ENCODE measurements at regions of chr15 and their contacts with region 1.

Region 1: DNA sequence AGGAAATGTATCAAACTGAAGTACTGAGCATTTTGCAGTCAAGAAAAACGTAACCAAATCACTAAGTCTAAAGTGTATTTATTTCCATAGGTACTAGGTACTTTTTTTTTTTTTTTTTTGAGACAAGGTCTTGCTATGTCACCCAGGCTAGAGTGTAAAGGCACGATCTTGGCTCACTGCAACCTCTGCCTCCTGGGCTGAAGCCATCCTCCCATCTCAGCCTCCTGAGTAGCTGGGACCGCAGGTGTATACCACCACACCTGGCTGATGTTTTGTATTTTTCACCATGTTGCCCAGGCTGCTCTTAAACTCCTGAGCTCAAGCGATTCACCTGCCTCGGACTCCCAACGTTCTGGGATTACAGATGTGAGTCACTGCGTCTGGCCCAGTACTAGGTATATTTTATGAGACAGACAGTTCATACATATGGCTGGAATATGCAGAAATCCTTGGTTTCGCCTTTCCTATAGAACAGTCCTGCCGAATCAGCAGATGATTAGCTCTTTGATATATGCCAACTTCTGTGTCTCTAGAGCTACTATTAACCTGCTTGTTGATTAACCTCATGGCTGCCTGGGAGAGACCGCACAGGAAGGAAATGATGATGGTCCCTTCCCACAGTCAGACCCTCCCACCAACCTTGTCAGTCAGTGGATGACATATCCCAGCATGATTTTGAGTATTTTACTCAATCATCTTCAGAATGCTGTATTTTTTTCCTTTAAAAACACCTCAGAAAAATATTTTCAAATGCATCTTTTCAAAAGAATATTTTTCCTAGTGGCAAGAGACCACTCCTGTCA is 32.3 kb downstream of the TMOD3 start:
- DNase-seq: peak; percentile 39 to 86 (median 52)
- ATAC-seq: peak; percentile 98
- H3K4me3 ChIP-seq: peak overlapping the region; percentile 28
- H3K4me3 Mint-ChIP-seq: peak overlapping the region; percentile 62
- H3K27ac ChIP-seq: peak overlapping the region in 1 of 2 donors; percentile 34
- H3K27ac Mint-ChIP-seq: peak overlapping the region; percentile 88
- H3K4me1 ChIP-seq: peaks cover 19% of the 10 kb centered on the region
- H3K4me1 Mint-ChIP-seq: peaks cover 68% of the 10 kb centered on the region
- H3K27me3 ChIP-seq: no peaks in the 10 kb centered on the region
- H3K27me3 Mint-ChIP-seq: no peaks in the 10 kb centered on the region
- CTCF ChIP-seq: no peak

Region 2: DNA sequence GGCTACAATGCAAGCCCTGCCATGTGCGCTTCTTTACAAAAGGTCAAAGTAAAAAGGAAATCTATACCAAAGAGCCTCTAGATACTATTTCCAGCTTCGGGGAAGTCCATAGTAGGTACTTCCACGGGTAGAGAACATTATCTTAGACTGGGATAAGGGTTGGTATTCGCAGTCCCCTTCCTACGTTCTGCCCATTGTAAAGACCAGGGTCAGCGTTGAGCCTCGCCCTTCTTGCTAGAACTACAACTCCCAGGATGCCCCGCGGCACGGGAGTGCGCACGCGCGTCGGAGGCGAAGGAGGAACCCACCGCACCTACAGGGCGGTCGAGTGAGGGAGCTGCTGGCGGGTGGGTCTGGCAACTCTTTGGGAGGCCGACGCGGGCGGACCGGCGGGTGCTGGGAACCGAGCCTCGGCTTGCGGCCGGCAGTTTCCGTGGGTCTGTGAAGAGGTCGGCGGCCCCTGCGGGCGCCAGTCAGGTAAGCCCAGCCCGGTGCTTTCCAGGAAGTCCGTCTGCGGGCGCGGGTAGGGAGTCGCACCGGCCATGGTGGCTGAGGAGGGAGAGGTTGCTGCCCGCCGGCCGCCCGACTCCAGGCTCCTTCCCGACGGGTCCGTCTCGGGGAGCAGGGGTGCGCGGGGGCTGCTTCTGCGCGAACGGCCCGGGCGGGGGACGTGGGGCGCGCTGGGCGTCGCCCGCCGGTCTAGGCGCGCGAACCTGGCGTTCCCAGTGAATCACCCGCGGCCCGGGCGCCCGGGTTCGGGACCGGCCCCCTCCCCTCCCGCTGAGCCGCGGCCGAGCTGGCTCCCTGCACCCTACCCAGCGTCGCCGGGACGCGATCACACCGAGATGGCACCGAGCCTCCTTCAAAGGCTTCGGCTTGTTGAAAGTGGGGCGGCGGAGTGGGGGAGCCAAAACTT is 32.1 kb before region 1 on chr15 and contains the start of gene TMOD3:
- CTCF ChIA-PET with region 1: interaction called, 3 read pairs
- POLR2A ChIA-PET with region 1: interaction called, 15 read pairs
- intact Hi-C with region 1: loop called (anchors 1 to 2 kb)
- DNase-seq: peak; percentile 83 to 93 (median 86)
- ATAC-seq: peak; percentile 82
- H3K4me3 ChIP-seq: peak within 1 kb of the TSS; percentile 82
- H3K4me3 Mint-ChIP-seq: peak within 1 kb of the TSS; percentile 100
- H3K27ac ChIP-seq: peak within 1 kb of the TSS; percentile 63 to 85
- H3K27ac Mint-ChIP-seq: peak within 1 kb of the TSS; percentile 91
- H3K4me1 ChIP-seq: peaks cover 15% of the 10 kb centered on the region
- H3K4me1 Mint-ChIP-seq: peaks cover 52% of the 10 kb centered on the region
- H3K27me3 ChIP-seq: no peaks in the 10 kb centered on the region
- H3K27me3 Mint-ChIP-seq: no peaks in the 10 kb centered on the region
- CTCF ChIP-seq: no peak
- total RNA-seq, gene TMOD3: 37.6 to 39.0 TPM

Region 3: DNA sequence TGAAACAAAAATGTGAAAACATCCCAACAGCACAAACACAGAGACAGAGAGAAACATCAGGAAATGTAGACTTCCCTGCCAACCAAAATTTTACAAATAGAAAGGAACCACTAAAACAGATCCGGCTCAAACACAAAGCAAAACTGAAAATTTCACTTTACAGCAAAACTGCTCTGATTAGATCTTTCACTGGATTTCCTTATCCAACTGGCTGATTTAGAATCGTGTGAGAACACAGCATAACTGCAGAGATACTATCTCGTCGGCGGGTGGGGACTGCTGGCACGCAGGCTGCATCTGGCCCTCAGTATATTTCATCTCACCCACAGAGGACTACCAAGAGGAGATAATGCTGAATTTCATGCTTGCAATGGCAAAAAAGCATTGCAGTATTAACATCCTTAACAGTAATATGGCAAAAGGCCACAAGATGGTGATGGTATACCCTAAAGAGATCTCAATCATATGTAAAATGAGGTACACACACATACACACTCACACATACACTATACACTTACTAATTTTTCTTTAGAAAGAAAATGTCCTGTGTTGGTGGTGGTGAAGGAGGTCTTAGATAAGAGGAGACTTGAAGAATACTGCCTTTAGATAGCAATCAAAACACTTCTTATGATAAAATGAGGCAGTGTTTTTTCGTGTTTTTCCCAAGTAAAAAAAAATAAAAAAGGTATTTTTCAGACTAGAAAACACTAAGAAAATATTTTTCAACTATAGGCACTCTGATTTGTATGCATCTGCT is 120.4 kb after region 1 on chr15:
- CTCF ChIA-PET with region 1: no interaction called
- POLR2A ChIA-PET with region 1: no interaction called
- intact Hi-C with region 1: no loop called
- DNase-seq: peak in 11 of 14 experiments; percentile 1 to 83 (median 36)
- ATAC-seq: peak; percentile 97
- H3K4me3 ChIP-seq: peak overlapping the region; percentile 34
- H3K4me3 Mint-ChIP-seq: peak overlapping the region; percentile 84
- H3K27ac ChIP-seq: no peak overlapping the region
- H3K27ac Mint-ChIP-seq: peak overlapping the region; percentile 74
- H3K4me1 ChIP-seq: peaks cover 8% of the 10 kb centered on the region
- H3K4me1 Mint-ChIP-seq: peaks cover 11% of the 10 kb centered on the region
- H3K27me3 ChIP-seq: no peaks in the 10 kb centered on the region
- H3K27me3 Mint-ChIP-seq: no peaks in the 10 kb centered on the region
- CTCF ChIP-seq: peak; percentile 75

Region 4: DNA sequence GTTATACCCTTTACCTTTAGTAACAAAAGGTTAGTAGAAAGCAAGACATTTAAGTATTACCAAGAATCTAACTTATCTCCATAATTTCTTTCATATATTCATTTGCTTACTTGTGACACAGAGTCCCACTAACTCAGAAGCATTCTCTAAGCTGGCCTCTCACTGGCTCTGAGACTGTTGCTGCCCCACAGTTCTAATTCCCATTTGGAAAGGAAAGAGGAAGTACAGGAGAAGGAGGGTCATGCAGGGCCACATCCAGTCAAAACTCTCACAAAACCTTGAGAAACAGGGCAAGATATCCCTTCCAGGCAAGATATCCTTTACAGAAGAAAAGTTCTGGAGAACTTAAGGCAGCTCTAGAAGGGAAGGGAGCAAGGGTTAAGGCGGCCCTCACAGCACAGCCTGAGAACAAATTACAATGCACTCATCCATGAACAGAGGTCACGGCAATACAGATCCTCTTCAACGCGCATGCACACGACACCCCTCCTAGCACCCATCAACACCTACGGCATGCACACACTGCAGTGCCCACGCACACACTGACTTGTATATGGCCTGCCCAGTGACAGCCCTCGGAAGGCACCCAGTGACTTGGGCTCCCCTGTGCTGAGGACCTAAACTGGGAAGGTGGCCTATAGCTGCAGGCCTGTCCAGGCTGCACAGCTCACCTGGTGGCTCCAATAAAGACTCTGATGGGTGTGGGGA is 446.8 kb after region 1 on chr15:
- CTCF ChIA-PET with region 1: no interaction called
- POLR2A ChIA-PET with region 1: no interaction called
- intact Hi-C with region 1: no loop called
- DNase-seq: no peak
- ATAC-seq: no peak
- H3K4me3 ChIP-seq: no peak overlapping the region
- H3K4me3 Mint-ChIP-seq: no peak overlapping the region
- H3K27ac ChIP-seq: no peak overlapping the region
- H3K27ac Mint-ChIP-seq: no peak overlapping the region
- H3K4me1 ChIP-seq: no peaks in the 10 kb centered on the region
- H3K4me1 Mint-ChIP-seq: peaks cover 6% of the 10 kb centered on the region
- H3K27me3 ChIP-seq: no peaks in the 10 kb centered on the region
- H3K27me3 Mint-ChIP-seq: no peaks in the 10 kb centered on the region
- CTCF ChIP-seq: no peak